B cell (primary cell): ENCODE measurements at regions of chr2 and their contacts with region 1.

Region 1: GRCh38 chr2:70964596-70965386 is 13.6 kb upstream of the ANKRD53 start:
- DNase-seq: peak; percentile 89
- ATAC-seq: peak; percentile 94
- H3K4me3 ChIP-seq: peak overlapping the region; percentile 35 to 79 (median 56)
- H3K4me3 Mint-ChIP-seq: peak overlapping the region; percentile 87
- H3K27ac ChIP-seq: no peak overlapping the region
- H3K27ac Mint-ChIP-seq: no peak overlapping the region
- H3K4me1 ChIP-seq: peaks cover 10 to 13% of the 10 kb centered on the region in 2 donors
- H3K4me1 Mint-ChIP-seq: peaks cover 7% of the 10 kb centered on the region
- H3K27me3 ChIP-seq: peaks cover 0 to 49% (median 14%) of the 10 kb centered on the region in 4 experiments
- H3K27me3 Mint-ChIP-seq: peaks cover 37% of the 10 kb centered on the region
- CTCF ChIP-seq: peak; percentile 94

Region 2: DNA sequence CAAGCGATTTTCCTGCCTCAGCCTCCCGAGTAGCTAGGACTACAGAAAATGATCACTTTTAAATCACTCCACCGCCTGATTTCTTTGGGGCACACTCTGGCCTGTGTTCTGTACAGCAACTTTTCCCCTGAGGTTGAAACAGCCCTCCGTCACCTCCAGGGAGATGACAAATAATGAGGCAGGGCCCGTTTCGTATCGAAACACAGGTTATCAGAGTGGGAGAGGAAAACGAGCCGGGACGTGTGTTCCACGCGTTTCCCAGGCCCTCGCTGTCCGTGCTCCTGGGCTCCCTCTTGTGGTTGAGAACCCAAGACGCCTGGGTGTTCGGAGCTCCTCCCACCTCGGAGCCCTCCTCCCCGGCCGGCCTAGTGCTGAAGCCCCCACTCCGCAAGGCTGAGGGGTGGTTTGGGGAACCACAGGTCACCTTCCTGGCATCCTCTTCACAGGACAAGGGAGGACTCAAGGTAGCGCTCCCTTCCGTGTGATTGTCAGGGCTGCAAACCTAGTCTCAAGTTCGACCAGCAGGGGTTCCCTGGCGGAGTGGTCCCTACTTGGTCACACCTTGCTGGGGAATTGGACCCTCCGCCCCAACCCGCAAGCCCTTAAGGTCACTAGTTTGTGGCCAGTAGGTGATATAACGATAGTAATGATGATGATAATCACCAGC is 16.3 kb before region 1 on chr2:
- CTCF ChIA-PET with region 1: interaction called, 27 read pairs
- POLR2A ChIA-PET with region 1: no interaction called
- intact Hi-C with region 1: no loop called
- DNase-seq: peak; percentile 83
- ATAC-seq: peak; percentile 99
- H3K4me3 ChIP-seq: peak overlapping the region in 3 of 5 experiments; percentile 30 to 41 (median 39)
- H3K4me3 Mint-ChIP-seq: peak overlapping the region; percentile 86
- H3K27ac ChIP-seq: no peak overlapping the region
- H3K27ac Mint-ChIP-seq: no peak overlapping the region
- H3K4me1 ChIP-seq: peaks cover 13 to 14% of the 10 kb centered on the region in 2 donors
- H3K4me1 Mint-ChIP-seq: peaks cover 11% of the 10 kb centered on the region
- H3K27me3 ChIP-seq: peaks cover 0 to 20% (median 11%) of the 10 kb centered on the region in 4 experiments
- H3K27me3 Mint-ChIP-seq: peaks cover 25% of the 10 kb centered on the region
- CTCF ChIP-seq: peak; percentile 84

Region 3: DNA sequence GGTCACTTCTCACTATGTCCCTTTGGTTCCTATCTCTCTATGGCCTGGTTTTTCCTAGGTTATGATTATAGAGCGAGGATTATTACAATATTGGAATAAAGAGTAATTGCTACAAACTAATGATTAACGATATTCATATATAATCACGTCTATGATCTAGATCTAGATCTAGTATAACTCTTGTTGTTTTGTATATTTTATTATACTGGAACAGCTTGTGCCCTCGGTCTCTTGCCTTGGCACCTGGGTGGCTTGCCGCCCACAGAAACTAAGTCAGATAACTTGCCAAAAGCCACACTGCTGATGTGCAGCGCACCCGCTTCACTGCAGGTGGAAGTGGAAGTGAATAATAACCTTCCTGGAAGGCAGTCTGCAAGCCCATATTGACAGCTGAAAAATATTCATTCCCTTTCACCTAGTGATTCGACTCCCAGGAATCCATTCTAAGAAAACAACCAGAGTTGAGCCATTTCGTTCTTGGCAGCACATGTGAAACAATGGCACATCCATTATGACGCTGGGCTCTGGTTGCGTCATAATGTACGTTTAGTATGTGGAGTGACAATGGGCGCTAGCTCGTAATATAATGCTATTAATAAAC is 12.9 kb after region 1 on chr2:
- CTCF ChIA-PET with region 1: interaction called, 53 read pairs
- POLR2A ChIA-PET with region 1: no interaction called
- intact Hi-C with region 1: loop called (anchors 1 kb)
- DNase-seq: peak; percentile 57
- ATAC-seq: no peak
- H3K4me3 ChIP-seq: peak overlapping the region; percentile 52 to 84 (median 64)
- H3K4me3 Mint-ChIP-seq: peak overlapping the region; percentile 95
- H3K27ac ChIP-seq: peak overlapping the region; percentile 43 to 79
- H3K27ac Mint-ChIP-seq: peak overlapping the region; percentile 93
- H3K4me1 ChIP-seq: peaks cover 16 to 22% of the 10 kb centered on the region in 2 donors
- H3K4me1 Mint-ChIP-seq: peaks cover 22% of the 10 kb centered on the region
- H3K27me3 ChIP-seq: no peaks in the 10 kb centered on the region
- H3K27me3 Mint-ChIP-seq: peaks cover 15% of the 10 kb centered on the region
- CTCF ChIP-seq: no peak

Region 4: GRCh38 chr2:70984576-70985282 is 19.9 kb after region 1 on chr2:
- CTCF ChIA-PET with region 1: interaction called, 44 read pairs
- POLR2A ChIA-PET with region 1: no interaction called
- intact Hi-C with region 1: no loop called
- DNase-seq: peak; percentile 82
- ATAC-seq: peak; percentile 93
- H3K4me3 ChIP-seq: peak overlapping the region in 2 of 5 experiments; percentile 13 to 17
- H3K4me3 Mint-ChIP-seq: peak overlapping the region; percentile 19
- H3K27ac ChIP-seq: no peak overlapping the region
- H3K27ac Mint-ChIP-seq: no peak overlapping the region
- H3K4me1 ChIP-seq: peaks cover 7 to 8% of the 10 kb centered on the region in 2 donors
- H3K4me1 Mint-ChIP-seq: peaks cover 10% of the 10 kb centered on the region
- H3K27me3 ChIP-seq: no peaks in the 10 kb centered on the region
- H3K27me3 Mint-ChIP-seq: no peaks in the 10 kb centered on the region
- CTCF ChIP-seq: peak; percentile 77

Region 5: DNA sequence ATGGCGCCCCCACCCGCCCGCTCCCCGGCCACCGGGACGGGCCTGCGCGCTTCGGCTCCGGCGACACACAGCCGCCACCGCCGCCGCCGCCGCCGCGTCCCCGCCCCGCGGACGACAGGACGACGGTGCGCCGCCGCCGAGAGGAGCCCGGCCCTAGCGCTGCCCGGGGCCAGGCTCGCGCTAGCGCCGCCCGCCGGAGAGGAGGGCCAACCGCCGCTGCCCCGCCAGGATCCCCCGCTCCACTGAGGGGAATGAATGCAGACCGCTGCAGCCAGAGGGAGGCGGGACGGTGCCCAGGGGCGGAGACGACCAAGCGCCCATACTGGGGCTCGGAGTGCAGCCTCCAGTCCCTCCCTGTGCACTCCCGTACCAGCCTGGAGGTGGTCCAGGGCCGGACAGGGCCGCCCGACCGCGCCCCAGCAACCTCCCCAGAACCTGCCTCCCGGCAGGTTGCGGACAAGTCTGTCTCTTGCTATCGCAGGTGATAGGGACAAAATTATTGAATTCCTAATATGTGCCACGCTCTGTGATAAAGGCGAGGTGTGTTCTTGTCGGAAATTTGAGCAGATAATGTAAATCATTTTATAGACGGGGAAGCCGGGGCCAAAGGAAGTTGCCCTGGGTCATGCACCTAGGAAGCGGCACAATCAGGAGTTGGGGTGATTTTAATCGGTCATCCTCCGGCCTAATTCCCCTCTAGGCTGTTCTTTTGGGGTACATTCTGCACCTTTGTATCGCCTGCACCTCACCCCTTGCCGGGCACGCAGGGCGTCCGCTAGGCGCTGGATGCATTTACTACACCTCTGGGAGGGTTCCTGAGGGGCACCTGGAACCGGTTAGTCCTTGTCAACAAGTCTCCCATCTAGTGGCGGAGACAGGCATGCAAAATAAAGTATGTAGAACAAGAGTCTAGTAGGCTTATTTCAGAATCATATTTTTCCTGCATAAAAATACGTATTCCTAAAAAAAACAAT is 30.3 kb after region 1 on chr2 and contains the start of gene TEX261:
- CTCF ChIA-PET with region 1: interaction called, 13 read pairs
- POLR2A ChIA-PET with region 1: no interaction called
- intact Hi-C with region 1: loop called (anchors 1 kb)
- DNase-seq: peak; percentile 92
- ATAC-seq: peak; percentile 97
- H3K4me3 ChIP-seq: peak within 1 kb of the TSS; percentile 81 to 93 (median 89)
- H3K4me3 Mint-ChIP-seq: peak within 1 kb of the TSS; percentile 96
- H3K27ac ChIP-seq: peak within 1 kb of the TSS; percentile 32 to 77
- H3K27ac Mint-ChIP-seq: peak within 1 kb of the TSS; percentile 92
- H3K4me1 ChIP-seq: peaks cover 21 to 23% of the 10 kb centered on the region in 2 donors
- H3K4me1 Mint-ChIP-seq: peaks cover 34% of the 10 kb centered on the region
- H3K27me3 ChIP-seq: no peaks in the 10 kb centered on the region
- H3K27me3 Mint-ChIP-seq: no peaks in the 10 kb centered on the region
- CTCF ChIP-seq: peak; percentile 59
- total RNA-seq, gene TEX261: 54.0 and 56.4 TPM in 2 replicates

Region 6: GRCh38 chr2:71000780-71001591 is 36.2 kb after region 1 on chr2:
- CTCF ChIA-PET with region 1: interaction called, 49 read pairs
- POLR2A ChIA-PET with region 1: no interaction called
- intact Hi-C with region 1: loop called (anchors 1 kb)
- DNase-seq: peak; percentile 87
- ATAC-seq: peak; percentile 97
- H3K4me3 ChIP-seq: peak overlapping the region in 4 of 5 experiments; percentile 31 to 76 (median 40)
- H3K4me3 Mint-ChIP-seq: peak overlapping the region; percentile 69
- H3K27ac ChIP-seq: peak overlapping the region in 1 of 2 donors; percentile 46
- H3K27ac Mint-ChIP-seq: peak overlapping the region; percentile 53
- H3K4me1 ChIP-seq: peaks cover 4 to 11% of the 10 kb centered on the region in 2 donors
- H3K4me1 Mint-ChIP-seq: peaks cover 7% of the 10 kb centered on the region
- H3K27me3 ChIP-seq: no peaks in the 10 kb centered on the region
- H3K27me3 Mint-ChIP-seq: peaks cover 12% of the 10 kb centered on the region
- CTCF ChIP-seq: peak; percentile 94

Region 7: DNA sequence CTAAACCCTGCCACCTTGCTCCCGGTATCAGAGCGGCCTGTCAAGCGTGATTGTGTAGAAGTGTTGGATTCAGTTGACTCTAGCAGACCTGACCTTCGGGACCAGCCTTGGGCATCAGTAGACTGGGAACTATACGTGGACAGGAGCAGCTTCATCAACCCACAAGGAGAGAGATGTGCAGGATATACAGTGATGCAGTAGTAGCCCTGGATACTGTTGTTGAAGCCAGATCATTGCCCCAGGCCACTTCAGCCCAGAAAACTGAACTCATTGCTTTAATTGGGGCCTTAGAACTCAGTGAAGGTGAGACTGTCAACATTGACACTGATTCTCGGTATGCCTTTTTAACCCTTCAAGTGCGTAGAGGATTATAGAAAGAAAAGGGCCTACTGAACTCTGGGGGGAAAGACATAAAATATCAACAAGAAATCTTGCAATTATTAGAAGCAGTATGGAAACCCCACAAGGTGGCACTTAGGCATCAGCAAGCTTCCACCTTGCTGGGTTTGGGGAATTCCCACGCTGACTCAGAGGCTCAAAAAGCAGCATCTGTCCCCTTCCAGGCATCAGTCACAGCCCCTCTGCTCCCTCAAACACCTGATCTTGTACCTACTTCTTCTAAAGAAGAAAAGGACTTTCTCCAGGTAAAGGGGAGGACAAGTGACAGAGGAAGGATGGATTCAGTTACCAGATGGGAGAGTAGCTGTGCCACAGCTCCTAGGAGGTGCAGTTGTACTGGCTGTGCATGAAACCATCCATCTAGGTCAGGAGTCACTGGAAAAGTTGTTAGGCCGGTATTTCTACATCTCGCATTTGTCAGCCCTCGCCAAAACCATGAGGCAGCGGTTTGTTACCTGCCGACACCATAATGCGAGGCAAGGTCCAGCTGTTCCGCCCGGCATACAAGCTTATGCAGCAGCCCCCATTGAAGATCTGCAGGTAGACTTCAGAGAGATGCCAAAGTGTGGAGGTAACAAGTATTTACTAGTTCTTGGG is 84.9 kb after region 1 on chr2:
- CTCF ChIA-PET with region 1: no interaction called
- POLR2A ChIA-PET with region 1: no interaction called
- intact Hi-C with region 1: no loop called
- DNase-seq: peak; percentile 67
- ATAC-seq: peak; percentile 47
- H3K4me3 ChIP-seq: no peak overlapping the region
- H3K4me3 Mint-ChIP-seq: no peak overlapping the region
- H3K27ac ChIP-seq: no peak overlapping the region
- H3K27ac Mint-ChIP-seq: no peak overlapping the region
- H3K4me1 ChIP-seq: peaks cover 0 to 3% of the 10 kb centered on the region in 2 donors
- H3K4me1 Mint-ChIP-seq: peaks cover 3% of the 10 kb centered on the region
- H3K27me3 ChIP-seq: peaks cover 0 to 3% (median 0%) of the 10 kb centered on the region in 4 experiments
- H3K27me3 Mint-ChIP-seq: peaks cover 6% of the 10 kb centered on the region
- CTCF ChIP-seq: peak; percentile 38

Region 8: GRCh38 chr2:71074893-71075395 is 110.2 kb after region 1 on chr2:
- CTCF ChIA-PET with region 1: no interaction called
- POLR2A ChIA-PET with region 1: no interaction called
- intact Hi-C with region 1: no loop called
- DNase-seq: no peak
- ATAC-seq: no peak
- H3K4me3 ChIP-seq: no peak overlapping the region
- H3K4me3 Mint-ChIP-seq: no peak overlapping the region
- H3K27ac ChIP-seq: peak overlapping the region in 1 of 2 donors; percentile 99
- H3K27ac Mint-ChIP-seq: no peak overlapping the region
- H3K4me1 ChIP-seq: peaks cover 37 to 40% of the 10 kb centered on the region in 2 donors
- H3K4me1 Mint-ChIP-seq: peaks cover 42% of the 10 kb centered on the region
- H3K27me3 ChIP-seq: no peaks in the 10 kb centered on the region
- H3K27me3 Mint-ChIP-seq: no peaks in the 10 kb centered on the region
- CTCF ChIP-seq: no peak